ENCODE measurements at regions of chr2 and their contacts with region 1.

Region 1: GRCh38 chr2:75710577-75711253 is at the start of gene GCFC2:
- DNase-seq: peak; percentile 73
- ATAC-seq: peak; percentile 92
- H3K4me3 ChIP-seq: peak within 1 kb of the TSS; percentile 49 to 64
- H3K27ac ChIP-seq: peak within 1 kb of the TSS; percentile 94
- H3K4me1 ChIP-seq: peaks cover 4 to 21% of the 10 kb centered on the region in 2 experiments; a peak in 3 of 4 replicates
- H3K27me3 ChIP-seq: no peaks in the 10 kb centered on the region
- CTCF ChIP-seq: peak in 2 of 3 experiments; percentile 25 to 30; a peak in 3 of 6 replicates
- POLR2A ChIP-seq: peak; percentile 91
- RAD21 ChIP-seq: no peak
- total RNA-seq, gene GCFC2: 20.1 TPM

Region 2: DNA sequence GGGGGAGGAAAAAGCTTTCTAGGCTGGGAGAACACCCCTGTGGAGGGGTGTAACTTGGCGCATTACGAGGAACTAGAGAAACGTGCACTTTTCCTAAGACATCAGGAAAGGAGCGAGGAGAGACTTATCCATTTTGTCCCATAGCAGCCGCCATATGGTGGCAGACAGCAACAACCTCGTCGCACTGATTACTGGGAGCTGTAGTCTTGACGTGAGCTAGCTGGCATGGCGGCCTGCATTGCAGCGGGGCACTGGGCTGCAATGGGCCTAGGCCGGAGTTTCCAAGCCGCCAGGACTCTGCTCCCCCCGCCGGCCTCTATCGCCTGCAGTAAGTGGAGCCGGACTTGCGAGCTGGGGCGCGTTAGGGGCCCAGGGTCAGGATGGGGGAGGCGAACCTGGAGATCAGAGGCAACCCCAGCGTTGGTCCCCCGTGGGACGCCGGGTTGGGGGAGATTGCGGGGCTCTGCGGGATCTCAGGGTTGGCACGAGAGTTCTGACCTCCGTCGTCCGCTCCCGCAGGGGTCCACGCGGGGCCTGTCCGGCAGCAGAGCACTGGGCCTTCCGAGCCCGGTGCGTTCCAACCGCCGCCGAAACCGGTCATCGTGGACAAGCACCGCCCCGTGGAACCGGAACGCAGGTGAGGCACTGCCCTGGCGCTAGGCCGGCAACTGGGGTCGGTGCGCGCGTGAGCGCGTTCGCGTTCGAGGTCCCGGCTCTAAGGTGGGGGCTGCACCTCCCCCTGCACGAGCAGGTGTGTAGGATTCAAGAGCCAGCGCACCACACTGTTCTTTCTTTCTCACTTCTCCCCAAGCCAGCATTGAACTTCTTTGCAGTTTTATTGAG is 63.9 kb before region 1 on chr2 and contains the start of gene MRPL19:
- CTCF ChIA-PET with region 1: interaction called, 10 read pairs
- POLR2A ChIA-PET with region 1: no interaction called
- RAD21 ChIA-PET with region 1: no interaction called
- intact Hi-C with region 1: loop called (anchors 2 kb)
- DNase-seq: peak; percentile 87
- ATAC-seq: peak; percentile 94
- H3K4me3 ChIP-seq: peak within 1 kb of the TSS; percentile 73 to 79
- H3K27ac ChIP-seq: peak within 1 kb of the TSS; percentile 82
- H3K4me1 ChIP-seq: peaks cover 6 to 14% of the 10 kb centered on the region in 2 experiments; a peak in 3 of 4 replicates
- H3K27me3 ChIP-seq: no peaks in the 10 kb centered on the region
- CTCF ChIP-seq: no peak
- POLR2A ChIP-seq: no peak
- RAD21 ChIP-seq: no peak
- total RNA-seq, gene MRPL19: 65.3 TPM

Measured in HCT116 (cell line).